ENCODE measurements at regions of chr12 and their contacts with region 1.

Region 1: GRCh38 chr12:84874125-84874824 is 38.3 kb downstream of the SLC6A15 start:
- DNase-seq: peak; percentile 10 to 62
- ATAC-seq: peak; percentile 89 to 96
- H3K4me3 ChIP-seq: no peak overlapping the region
- H3K27ac ChIP-seq: no peak overlapping the region
- H3K4me1 ChIP-seq: no peaks in the 10 kb centered on the region
- CTCF ChIP-seq: peak; percentile 86
- EP300 ChIP-seq: no peak
- POLR2A ChIP-seq: no peak
- RAD21 ChIP-seq: peak; percentile 90

Region 2: GRCh38 chr12:84840356-84840755 is 33.9 kb before region 1 on chr12:
- CTCF ChIA-PET with region 1: no interaction called
- POLR2A ChIA-PET with region 1: no interaction called
- DNase-seq: no peak
- ATAC-seq: no peak
- H3K4me3 ChIP-seq: no peak overlapping the region
- H3K27ac ChIP-seq: no peak overlapping the region
- H3K4me1 ChIP-seq: no peaks in the 10 kb centered on the region
- CTCF ChIP-seq: no peak
- EP300 ChIP-seq: no peak
- POLR2A ChIP-seq: no peak
- RAD21 ChIP-seq: no peak

Region 3: GRCh38 chr12:84955298-84955697 is 81.0 kb after region 1 on chr12:
- CTCF ChIA-PET with region 1: no interaction called
- POLR2A ChIA-PET with region 1: no interaction called
- DNase-seq: no peak
- ATAC-seq: no peak
- H3K4me3 ChIP-seq: no peak overlapping the region
- H3K27ac ChIP-seq: no peak overlapping the region
- H3K4me1 ChIP-seq: no peaks in the 10 kb centered on the region
- CTCF ChIP-seq: no peak
- EP300 ChIP-seq: no peak
- POLR2A ChIP-seq: no peak
- RAD21 ChIP-seq: no peak

Region 4: GRCh38 chr12:84976133-84976532 is 101.9 kb after region 1 on chr12:
- CTCF ChIA-PET with region 1: no interaction called
- POLR2A ChIA-PET with region 1: no interaction called
- DNase-seq: no peak
- ATAC-seq: no peak
- H3K4me3 ChIP-seq: no peak overlapping the region
- H3K27ac ChIP-seq: no peak overlapping the region
- H3K4me1 ChIP-seq: no peaks in the 10 kb centered on the region
- CTCF ChIP-seq: no peak
- EP300 ChIP-seq: no peak
- POLR2A ChIP-seq: no peak
- RAD21 ChIP-seq: no peak

Region 5: DNA sequence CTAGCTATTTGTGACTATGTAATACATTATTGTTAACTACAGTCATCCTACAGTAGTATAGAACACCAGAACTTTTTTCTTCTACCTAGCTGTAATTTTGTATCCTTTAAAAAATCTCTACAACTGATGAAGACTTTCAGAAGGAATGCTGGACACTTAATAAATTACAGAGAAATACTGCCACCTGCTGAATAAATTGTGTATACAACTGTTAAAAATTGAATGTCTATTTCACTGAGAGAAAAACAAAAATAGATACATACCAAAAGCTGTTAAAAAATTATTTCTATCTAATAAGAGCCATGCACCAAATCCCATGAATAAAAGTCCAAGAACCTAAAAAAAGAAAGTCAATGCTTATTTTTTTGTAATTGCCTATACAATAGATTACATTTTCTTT is 155.2 kb after region 1 on chr12:
- CTCF ChIA-PET with region 1: interaction called, 182 read pairs
- POLR2A ChIA-PET with region 1: interaction called, 3 read pairs
- DNase-seq: peak; percentile 16 to 23
- ATAC-seq: peak; percentile 54 to 75; a peak in 5 of 6 replicates
- H3K4me3 ChIP-seq: no peak overlapping the region
- H3K27ac ChIP-seq: no peak overlapping the region
- H3K4me1 ChIP-seq: no peaks in the 10 kb centered on the region
- CTCF ChIP-seq: peak; percentile 64
- EP300 ChIP-seq: no peak
- POLR2A ChIP-seq: no peak
- RAD21 ChIP-seq: peak; percentile 74 to 79

Region 6: GRCh38 chr12:85036241-85036707 is 162.0 kb after region 1 on chr12 and contains the starts of genes LRRIQ1 and TSPAN19:
- CTCF ChIA-PET with region 1: interaction called, 182 read pairs
- POLR2A ChIA-PET with region 1: no interaction called
- DNase-seq: peak; percentile 75 to 92
- ATAC-seq: peak; percentile 99
- H3K4me3 ChIP-seq: peak within 1 kb of the TSS; percentile 50
- H3K27ac ChIP-seq: peak within 1 kb of the TSS in 1 of 2 experiments; percentile 80; a peak in 3 of 6 replicates
- H3K4me1 ChIP-seq: no peaks in the 10 kb centered on the region
- CTCF ChIP-seq: no peak
- EP300 ChIP-seq: no peak
- POLR2A ChIP-seq: no peak
- RAD21 ChIP-seq: no peak
- polyA plus RNA-seq, gene LRRIQ1: 1.7 and 3.7 TPM in 2 replicates
- polyA plus RNA-seq, gene TSPAN19: 0.29 and 0.36 TPM in 2 replicates

Region 7: DNA sequence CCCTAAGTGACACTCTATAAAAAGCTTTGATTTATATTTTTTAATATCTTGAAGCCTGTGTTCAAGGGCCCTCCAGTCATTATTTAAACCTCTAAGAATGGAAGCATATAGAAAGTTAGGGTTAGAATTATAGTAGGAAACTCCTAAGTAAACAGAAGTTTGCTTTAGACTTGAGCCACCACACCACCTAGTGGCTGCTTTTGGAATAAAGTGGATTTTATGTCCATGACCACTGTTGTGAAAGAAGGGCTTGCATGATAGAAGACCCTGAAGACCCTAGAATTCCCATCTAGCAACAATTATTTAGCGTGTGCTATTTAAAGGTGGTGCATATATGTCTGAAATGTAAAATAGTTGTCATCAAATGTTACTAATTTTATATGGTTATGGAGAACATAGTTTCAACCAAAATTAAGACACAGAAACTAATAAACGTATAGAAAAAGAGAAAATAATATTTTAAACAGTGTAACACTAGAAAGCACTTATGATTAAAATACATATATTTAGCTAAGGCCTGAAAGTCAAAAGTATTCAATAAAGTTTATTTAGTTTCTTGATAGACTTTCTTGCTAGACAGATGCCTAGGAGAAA is 183.2 kb after region 1 on chr12:
- CTCF ChIA-PET with region 1: interaction called, 20 read pairs
- POLR2A ChIA-PET with region 1: no interaction called
- DNase-seq: peak; percentile 5 to 68
- ATAC-seq: peak in 1 of 2 experiments; percentile 81; a peak in 3 of 6 replicates
- H3K4me3 ChIP-seq: no peak overlapping the region
- H3K27ac ChIP-seq: no peak overlapping the region
- H3K4me1 ChIP-seq: no peaks in the 10 kb centered on the region
- CTCF ChIP-seq: peak; percentile 70
- EP300 ChIP-seq: no peak
- POLR2A ChIP-seq: no peak
- RAD21 ChIP-seq: peak; percentile 62 to 69

Measured in A549 (cell line).